CD4-positive, alpha-beta memory T cell (primary cell): ENCODE measurements at regions of chr11 and their contacts with region 1.

Region 1: DNA sequence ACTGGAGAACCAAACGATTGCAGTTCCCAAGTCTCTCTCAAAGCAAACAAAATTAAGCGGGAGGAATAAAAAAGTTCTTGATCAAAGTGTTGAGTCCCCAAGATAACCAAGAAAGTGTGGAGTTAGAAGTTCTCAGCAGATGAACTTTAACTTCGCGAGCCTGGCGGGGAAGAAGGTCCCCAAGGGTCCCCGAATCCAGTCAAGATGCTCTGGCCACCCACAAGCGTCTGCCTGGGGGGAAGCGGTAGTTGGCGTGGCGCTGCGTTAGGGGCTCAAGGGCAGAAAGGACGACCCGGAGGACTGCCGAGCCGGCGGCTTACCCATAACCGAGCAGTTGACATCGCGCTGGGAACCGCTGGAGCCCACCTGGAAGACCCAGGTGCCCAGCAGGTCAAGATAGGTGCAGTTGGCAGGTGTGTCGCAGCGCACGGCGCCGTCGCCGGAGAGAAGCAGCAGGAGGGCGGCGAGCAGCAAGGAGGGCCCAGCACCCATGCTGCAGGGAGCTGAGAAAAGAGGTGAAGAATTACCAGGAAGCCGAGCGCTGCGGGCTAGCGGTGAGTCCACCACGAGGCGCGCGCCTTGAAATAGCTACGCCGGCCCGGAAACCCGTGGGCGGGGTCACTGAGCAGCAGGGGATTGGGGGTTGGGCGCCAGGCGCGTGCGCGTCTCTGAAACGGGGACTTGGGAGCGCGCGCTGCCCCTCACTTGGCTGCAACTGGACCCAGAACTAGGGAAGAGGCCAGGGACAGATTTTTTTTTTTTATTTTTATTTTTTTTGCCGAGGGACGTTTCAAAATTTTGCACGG is at the start of gene CTSC:
- DNase-seq: peak; percentile 87 to 91 (median 88)
- H3K4me3 ChIP-seq: peak within 1 kb of the TSS; percentile 85 to 96
- H3K4me3 Mint-ChIP-seq: peak within 1 kb of the TSS; percentile 93 to 100 (median 99)
- H3K27ac ChIP-seq: peak within 1 kb of the TSS; percentile 73
- H3K27ac Mint-ChIP-seq: peak within 1 kb of the TSS; percentile 81 to 99 (median 96)
- H3K4me1 ChIP-seq: peaks cover 56% of the 10 kb centered on the region
- H3K4me1 Mint-ChIP-seq: peaks cover 37 to 74% (median 55%) of the 10 kb centered on the region in 4 donors
- H3K27me3 ChIP-seq: no peaks in the 10 kb centered on the region
- H3K27me3 Mint-ChIP-seq: no peaks in the 10 kb centered on the region
- total RNA-seq, gene CTSC: 57.1 to 60.0 TPM

Region 2: DNA sequence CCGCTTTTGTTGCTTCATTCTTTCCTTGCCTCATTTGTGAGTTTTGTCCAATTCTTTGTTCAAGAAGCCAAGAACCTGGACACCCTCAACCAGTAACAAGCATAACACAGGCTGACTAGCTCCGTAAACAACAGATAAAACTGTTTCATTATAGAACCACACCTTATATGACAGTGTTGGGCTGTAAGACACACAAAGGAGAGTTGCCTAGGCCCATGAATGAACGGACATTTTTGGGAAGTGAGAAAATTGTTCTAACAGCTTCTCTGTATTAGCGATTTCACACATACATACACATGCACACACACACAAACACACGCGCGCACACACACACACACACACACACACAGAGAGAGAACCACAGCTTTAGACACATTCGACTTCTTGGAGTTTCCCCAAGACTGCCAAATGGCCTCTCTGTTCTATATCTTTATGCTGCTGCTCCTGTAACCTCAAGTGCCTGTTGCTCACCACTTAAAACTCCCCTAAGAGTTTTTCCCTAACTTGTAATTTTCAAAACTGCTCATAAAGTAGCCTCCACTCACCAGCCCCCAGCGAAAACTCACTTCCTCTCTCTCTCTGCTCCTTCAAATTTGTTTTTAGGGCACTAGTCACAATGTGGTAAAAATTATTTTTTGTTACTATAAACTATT is 35.8 kb before region 1 on chr11:
- CTCF ChIA-PET with region 1: interaction called, 3 read pairs
- POLR2A ChIA-PET with region 1: interaction called, 6 read pairs
- intact Hi-C with region 1: loop called (anchors 2 kb)
- DNase-seq: peak; percentile 12 to 64 (median 20)
- H3K4me3 ChIP-seq: no peak overlapping the region
- H3K4me3 Mint-ChIP-seq: peak overlapping the region in 7 of 8 donors; percentile 67 to 82 (median 74)
- H3K27ac ChIP-seq: peak overlapping the region; percentile 29
- H3K27ac Mint-ChIP-seq: peak overlapping the region in 6 of 7 donors; percentile 53 to 90 (median 82)
- H3K4me1 ChIP-seq: peaks cover 12% of the 10 kb centered on the region
- H3K4me1 Mint-ChIP-seq: peaks cover 16 to 49% (median 35%) of the 10 kb centered on the region in 4 donors
- H3K27me3 ChIP-seq: no peaks in the 10 kb centered on the region
- H3K27me3 Mint-ChIP-seq: no peaks in the 10 kb centered on the region

Region 3: GRCh38 chr11:88348870-88349269 is 11.5 kb after region 1 on chr11:
- CTCF ChIA-PET with region 1: interaction called, 5 read pairs
- POLR2A ChIA-PET with region 1: interaction called, 19 read pairs
- intact Hi-C with region 1: loop called (anchors 2 kb)
- DNase-seq: no peak
- H3K4me3 ChIP-seq: no peak overlapping the region
- H3K4me3 Mint-ChIP-seq: no peak overlapping the region
- H3K27ac ChIP-seq: no peak overlapping the region
- H3K27ac Mint-ChIP-seq: no peak overlapping the region
- H3K4me1 ChIP-seq: peaks cover 20% of the 10 kb centered on the region
- H3K4me1 Mint-ChIP-seq: peaks cover 4 to 23% (median 11%) of the 10 kb centered on the region in 4 donors
- H3K27me3 ChIP-seq: no peaks in the 10 kb centered on the region
- H3K27me3 Mint-ChIP-seq: no peaks in the 10 kb centered on the region

Region 4: GRCh38 chr11:88359541-88359940 is 22.2 kb after region 1 on chr11:
- CTCF ChIA-PET with region 1: interaction called, 5 read pairs
- POLR2A ChIA-PET with region 1: interaction called, 19 read pairs
- intact Hi-C with region 1: loop called (anchors 2 kb)
- DNase-seq: peak in 2 of 5 donors; percentile 14 to 24
- H3K4me3 ChIP-seq: peak overlapping the region in 1 of 2 donors; percentile 27
- H3K4me3 Mint-ChIP-seq: peak overlapping the region in 7 of 8 donors; percentile 28 to 68 (median 54)
- H3K27ac ChIP-seq: no peak overlapping the region
- H3K27ac Mint-ChIP-seq: peak overlapping the region in 2 of 7 donors; percentile 3 to 22
- H3K4me1 ChIP-seq: peaks cover 53% of the 10 kb centered on the region
- H3K4me1 Mint-ChIP-seq: peaks cover 26 to 50% (median 40%) of the 10 kb centered on the region in 4 donors
- H3K27me3 ChIP-seq: no peaks in the 10 kb centered on the region
- H3K27me3 Mint-ChIP-seq: no peaks in the 10 kb centered on the region

Region 5: DNA sequence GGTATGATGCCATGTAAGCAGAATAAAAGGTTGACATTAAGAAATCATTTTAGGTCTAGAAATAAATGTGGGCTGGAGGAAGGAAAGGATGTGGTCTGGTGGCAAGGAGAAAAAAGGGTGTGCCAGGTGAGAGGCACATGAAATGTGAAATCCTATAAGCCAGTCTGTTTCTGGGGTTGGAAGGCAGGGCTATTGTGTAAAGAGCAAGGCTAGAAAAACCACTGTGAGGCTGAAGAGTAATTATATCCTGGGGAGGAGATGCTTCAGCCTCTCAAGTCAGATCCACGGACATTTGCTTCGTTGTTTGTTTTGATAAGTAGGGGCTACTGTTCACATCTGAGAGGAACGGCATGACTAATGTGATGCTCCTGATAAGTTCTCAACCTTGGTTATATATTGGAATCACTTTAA is 77.6 kb after region 1 on chr11:
- CTCF ChIA-PET with region 1: interaction called, 9 read pairs
- POLR2A ChIA-PET with region 1: interaction called, 7 read pairs
- intact Hi-C with region 1: loop called (anchors 1 kb)
- DNase-seq: peak; percentile 42 to 62 (median 49)
- H3K4me3 ChIP-seq: peak overlapping the region in 1 of 2 donors; percentile 20
- H3K4me3 Mint-ChIP-seq: peak overlapping the region; percentile 21 to 85 (median 78)
- H3K27ac ChIP-seq: no peak overlapping the region
- H3K27ac Mint-ChIP-seq: peak overlapping the region; percentile 15 to 83 (median 43)
- H3K4me1 ChIP-seq: peaks cover 50% of the 10 kb centered on the region
- H3K4me1 Mint-ChIP-seq: peaks cover 29 to 57% (median 44%) of the 10 kb centered on the region in 4 donors
- H3K27me3 ChIP-seq: no peaks in the 10 kb centered on the region
- H3K27me3 Mint-ChIP-seq: no peaks in the 10 kb centered on the region

Region 6: GRCh38 chr11:88849368-88849767 is 512.0 kb after region 1 on chr11:
- CTCF ChIA-PET with region 1: no interaction called
- POLR2A ChIA-PET with region 1: no interaction called
- intact Hi-C with region 1: loop called (anchors 5 kb)
- DNase-seq: no peak
- H3K4me3 ChIP-seq: no peak overlapping the region
- H3K4me3 Mint-ChIP-seq: no peak overlapping the region
- H3K27ac ChIP-seq: no peak overlapping the region
- H3K27ac Mint-ChIP-seq: no peak overlapping the region
- H3K4me1 ChIP-seq: peaks cover 9% of the 10 kb centered on the region
- H3K4me1 Mint-ChIP-seq: peaks cover 11 to 17% (median 13%) of the 10 kb centered on the region in 4 donors
- H3K27me3 ChIP-seq: no peaks in the 10 kb centered on the region
- H3K27me3 Mint-ChIP-seq: no peaks in the 10 kb centered on the region